ENCODE measurements at regions of chr1 and their contacts with region 1.

Region 1: DNA sequence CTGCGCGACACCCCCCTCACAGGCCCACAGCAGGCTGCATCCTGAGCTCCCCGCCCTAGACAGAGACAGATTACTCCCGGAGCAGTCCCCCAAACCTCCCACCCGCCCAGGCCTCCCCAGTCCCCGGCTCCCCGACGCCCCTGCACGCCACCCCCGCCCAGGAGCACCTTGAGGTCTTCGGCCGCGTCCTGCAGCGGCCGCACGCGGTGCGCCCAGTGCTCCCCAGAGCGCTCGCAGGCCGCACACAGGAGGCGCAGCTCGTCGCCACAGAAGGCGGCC is 709 bp downstream of the TRIM11 start:
- DNase-seq: no peak
- ATAC-seq: no peak
- H3K4me3 Mint-ChIP-seq: peak overlapping the region; percentile 90
- H3K27ac Mint-ChIP-seq: peak overlapping the region; percentile 73
- H3K4me1 Mint-ChIP-seq: peaks cover 42% of the 10 kb centered on the region
- H3K27me3 Mint-ChIP-seq: no peaks in the 10 kb centered on the region
- CTCF ChIP-seq: no peak

Region 2: GRCh38 chr1:226526801-226527595 is 1878.9 kb before region 1 on chr1:
- CTCF ChIA-PET with region 1: no interaction called
- POLR2A ChIA-PET with region 1: interaction called, 13 read pairs
- intact Hi-C with region 1: no loop called
- DNase-seq: no peak
- ATAC-seq: no peak
- H3K4me3 Mint-ChIP-seq: no peak overlapping the region
- H3K27ac Mint-ChIP-seq: no peak overlapping the region
- H3K4me1 Mint-ChIP-seq: no peaks in the 10 kb centered on the region
- H3K27me3 Mint-ChIP-seq: peaks cover 12% of the 10 kb centered on the region
- CTCF ChIP-seq: no peak

Region 3: DNA sequence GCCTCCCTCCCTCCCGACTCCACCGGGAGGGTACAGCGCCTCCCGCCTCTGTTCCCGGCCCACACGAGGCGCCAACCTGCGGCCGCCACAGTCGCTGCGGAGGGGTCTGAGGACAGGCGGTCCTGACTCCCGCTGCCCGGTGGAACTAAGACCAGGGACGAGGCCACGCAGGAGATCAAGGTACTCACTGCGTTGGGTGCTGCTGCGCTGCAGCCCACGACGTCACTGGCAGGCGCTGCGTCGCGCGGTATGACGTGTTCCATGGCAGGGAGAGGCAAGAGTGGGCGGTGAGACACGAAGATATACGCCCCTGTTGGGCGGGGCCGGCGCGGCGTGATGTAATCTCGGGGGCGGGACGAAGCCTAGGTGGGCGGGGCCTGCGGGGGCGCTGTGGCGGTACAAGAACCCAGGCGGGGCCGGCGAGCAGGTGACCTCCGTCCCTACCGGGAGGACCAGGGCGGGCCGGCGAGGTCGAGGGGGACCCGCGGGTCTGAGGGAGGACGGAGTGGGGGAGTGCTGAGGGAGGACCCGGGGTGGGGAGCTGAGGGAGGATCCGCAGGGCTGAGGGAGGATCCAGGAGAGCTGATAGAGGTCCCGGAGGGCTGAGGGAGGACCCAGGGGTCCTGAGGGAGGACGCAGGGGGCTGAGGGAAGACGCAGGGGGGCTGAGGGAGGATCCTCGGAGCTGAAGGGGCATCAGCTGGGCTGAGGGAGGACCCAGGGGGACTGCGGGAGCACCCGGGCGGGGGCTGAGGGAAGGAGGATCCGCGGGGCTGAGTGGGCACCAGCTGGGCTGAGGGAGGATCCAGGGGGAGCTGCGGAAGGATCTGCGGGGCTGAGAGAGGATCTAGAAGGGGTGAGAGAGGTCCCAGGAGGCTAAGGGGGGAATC is 296.6 kb before region 1 on chr1 and contains the start of gene MRPL55:
- CTCF ChIA-PET with region 1: no interaction called
- POLR2A ChIA-PET with region 1: interaction called, 4 read pairs
- intact Hi-C with region 1: loop called (anchors 1 kb)
- DNase-seq: peak; percentile 100
- ATAC-seq: peak; percentile 96
- H3K4me3 Mint-ChIP-seq: peak within 1 kb of the TSS; percentile 92
- H3K27ac Mint-ChIP-seq: peak within 1 kb of the TSS; percentile 93
- H3K4me1 Mint-ChIP-seq: peaks cover 24% of the 10 kb centered on the region
- H3K27me3 Mint-ChIP-seq: no peaks in the 10 kb centered on the region
- CTCF ChIP-seq: no peak
- total RNA-seq, gene MRPL55: 34.0 and 34.3 TPM in 2 replicates

Region 4: DNA sequence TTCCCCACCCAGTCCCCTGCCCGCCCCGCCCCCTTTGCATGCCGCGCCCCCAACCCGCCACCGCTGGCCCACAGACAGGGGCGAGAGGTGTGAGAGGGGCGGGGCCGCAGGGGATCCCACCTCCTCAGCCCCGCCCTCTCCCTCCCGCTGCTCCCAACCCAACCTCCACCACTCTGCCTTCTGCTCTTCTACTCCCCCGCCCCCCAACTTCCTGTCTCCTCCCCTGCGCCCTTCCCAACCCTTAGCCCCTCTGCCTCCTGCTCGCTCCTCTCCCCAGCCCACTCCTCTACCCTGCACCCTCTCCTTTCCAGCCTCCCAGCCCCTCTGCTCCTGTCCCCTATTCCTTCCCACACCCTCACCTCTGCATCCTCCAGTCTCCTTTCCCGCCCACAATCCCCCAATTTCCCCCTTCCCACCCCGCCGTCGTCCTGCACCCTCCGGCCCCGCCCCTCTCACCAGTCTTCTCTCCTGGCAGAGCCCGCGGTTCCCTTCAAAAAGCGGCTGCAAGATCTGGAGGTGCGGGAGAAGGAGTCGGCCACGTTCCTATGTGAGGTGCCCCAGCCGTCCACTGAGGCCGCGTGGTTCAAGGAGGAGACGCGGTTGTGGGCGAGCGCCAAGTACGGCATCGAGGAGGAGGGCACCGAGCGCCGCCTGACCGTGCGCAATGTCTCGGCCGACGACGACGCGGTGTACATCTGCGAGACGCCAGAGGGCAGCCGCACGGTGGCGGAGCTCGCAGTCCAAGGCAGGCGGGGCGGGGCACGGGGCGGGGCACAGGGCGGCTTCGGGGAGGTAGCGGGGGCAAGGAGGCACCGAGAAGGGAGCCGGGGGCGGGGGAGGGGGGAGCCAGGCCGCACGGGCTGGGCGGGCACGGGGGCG is 192.7 kb before region 1 on chr1:
- CTCF ChIA-PET with region 1: no interaction called
- POLR2A ChIA-PET with region 1: interaction called, 5 read pairs
- intact Hi-C with region 1: loop called (anchors 2 kb)
- DNase-seq: peak; percentile 76
- ATAC-seq: peak; percentile 97
- H3K4me3 Mint-ChIP-seq: peak overlapping the region; percentile 89
- H3K27ac Mint-ChIP-seq: peak overlapping the region; percentile 30
- H3K4me1 Mint-ChIP-seq: peaks cover 2% of the 10 kb centered on the region
- H3K27me3 Mint-ChIP-seq: no peaks in the 10 kb centered on the region
- CTCF ChIP-seq: no peak

Region 5: DNA sequence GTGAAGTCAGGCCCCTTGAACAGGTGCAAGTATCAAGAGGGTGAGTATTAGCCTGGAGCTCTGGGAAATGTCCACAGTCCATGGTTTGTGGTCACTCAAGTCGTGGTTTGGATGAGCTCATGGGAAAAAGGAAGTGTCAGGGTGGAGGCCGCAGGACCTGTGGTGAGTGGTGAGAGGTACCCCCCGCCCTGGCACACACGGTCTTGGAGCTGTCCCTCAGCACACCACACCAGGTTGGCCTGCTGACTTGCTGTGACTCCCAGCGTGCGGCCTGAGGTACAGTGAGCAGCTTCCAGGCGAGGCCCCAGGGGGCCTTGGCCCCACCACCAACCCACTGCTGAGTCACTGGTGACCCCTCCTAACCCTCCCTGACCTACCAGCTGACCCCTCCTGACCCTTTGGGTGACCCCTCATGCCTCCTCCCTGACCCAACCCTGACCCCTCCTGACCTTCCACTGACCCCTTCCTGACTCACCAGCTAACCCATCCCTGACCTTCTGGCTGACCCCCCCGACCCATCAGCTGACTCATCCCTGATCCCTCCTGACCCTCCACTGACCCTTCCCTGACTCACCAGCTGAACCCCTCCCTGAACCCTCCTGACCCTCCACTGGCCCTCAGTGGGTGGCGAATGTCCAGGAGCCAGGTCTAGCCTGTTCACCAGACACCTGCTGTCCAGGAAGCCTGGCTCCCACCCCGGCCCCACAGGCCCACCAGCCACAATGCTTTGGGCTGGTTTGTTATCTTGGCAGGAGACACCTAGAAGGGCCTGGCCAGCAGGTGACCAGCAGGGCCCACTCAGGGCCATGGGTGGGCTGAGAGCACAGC is 46.5 kb after region 1 on chr1:
- CTCF ChIA-PET with region 1: no interaction called
- POLR2A ChIA-PET with region 1: interaction called, 16 read pairs
- intact Hi-C with region 1: loop called (anchors 1 kb)
- DNase-seq: no peak
- ATAC-seq: no peak
- H3K4me3 Mint-ChIP-seq: no peak overlapping the region
- H3K27ac Mint-ChIP-seq: no peak overlapping the region
- H3K4me1 Mint-ChIP-seq: peaks cover 8% of the 10 kb centered on the region
- H3K27me3 Mint-ChIP-seq: peaks cover 15% of the 10 kb centered on the region
- CTCF ChIP-seq: no peak

Region 6: GRCh38 chr1:228500901-228501871 is 95.3 kb after region 1 on chr1:
- CTCF ChIA-PET with region 1: no interaction called
- POLR2A ChIA-PET with region 1: no interaction called
- intact Hi-C with region 1: loop called (anchors 5 kb)
- DNase-seq: peak; percentile 72
- ATAC-seq: peak; percentile 96
- H3K4me3 Mint-ChIP-seq: peak overlapping the region; percentile 77
- H3K27ac Mint-ChIP-seq: peak overlapping the region; percentile 84
- H3K4me1 Mint-ChIP-seq: peaks cover 17% of the 10 kb centered on the region
- H3K27me3 Mint-ChIP-seq: peaks cover 9% of the 10 kb centered on the region
- CTCF ChIP-seq: peak; percentile 91

Region 7: DNA sequence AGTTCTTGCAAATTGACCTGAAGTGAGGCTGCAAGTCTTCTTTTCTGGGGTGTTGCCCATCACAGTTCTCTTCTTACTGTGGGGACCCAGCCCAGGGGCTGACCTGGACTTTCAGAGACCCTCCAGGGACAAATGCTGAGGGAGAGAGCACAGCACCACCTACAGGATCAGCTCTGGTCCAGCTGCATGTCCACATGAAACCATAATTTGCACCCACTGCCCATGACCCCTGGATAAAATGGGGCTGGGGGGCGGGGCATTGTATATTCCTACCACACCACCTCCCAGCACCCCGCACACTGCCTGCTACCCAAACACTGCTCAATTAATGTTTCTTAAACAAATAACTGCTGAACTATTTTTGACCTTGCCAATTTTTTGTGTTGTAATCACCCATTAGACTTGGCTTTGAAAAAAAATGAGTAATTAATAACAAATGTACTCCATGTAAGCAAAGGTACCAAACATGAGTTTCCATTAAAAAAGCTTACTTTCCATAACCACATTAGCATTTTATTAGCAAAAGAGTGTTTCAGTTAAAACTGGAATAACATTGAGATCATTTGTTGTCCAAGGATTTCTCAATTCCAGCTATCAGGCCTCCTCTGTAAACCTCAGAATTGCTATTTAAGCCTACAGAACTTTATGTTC is 696.9 kb after region 1 on chr1:
- CTCF ChIA-PET with region 1: no interaction called
- POLR2A ChIA-PET with region 1: no interaction called
- intact Hi-C with region 1: no loop called
- DNase-seq: no peak
- ATAC-seq: no peak
- H3K4me3 Mint-ChIP-seq: no peak overlapping the region
- H3K27ac Mint-ChIP-seq: no peak overlapping the region
- H3K4me1 Mint-ChIP-seq: no peaks in the 10 kb centered on the region
- H3K27me3 Mint-ChIP-seq: peaks cover 9% of the 10 kb centered on the region
- CTCF ChIP-seq: no peak

Measured in activated B cell treated with CpG ODN at 0.5 μM for 24 hours (primary cell).